CD4-positive, alpha-beta memory T cell (primary cell): ENCODE measurements at regions of chr7 and their contacts with region 1.

Region 1: GRCh38 chr7:111012799-111013675 is 77.9 kb upstream of the LRRN3 start:
- DNase-seq: peak; percentile 39 to 58 (median 43)
- H3K4me3 ChIP-seq: peak overlapping the region; percentile 18 to 28
- H3K4me3 Mint-ChIP-seq: peak overlapping the region; percentile 49 to 85 (median 77)
- H3K27ac ChIP-seq: peak overlapping the region; percentile 54
- H3K27ac Mint-ChIP-seq: peak overlapping the region; percentile 68 to 91 (median 86)
- H3K4me1 ChIP-seq: peaks cover 69% of the 10 kb centered on the region
- H3K4me1 Mint-ChIP-seq: peaks cover 35 to 63% (median 50%) of the 10 kb centered on the region in 4 donors
- H3K27me3 ChIP-seq: no peaks in the 10 kb centered on the region
- H3K27me3 Mint-ChIP-seq: no peaks in the 10 kb centered on the region

Region 2: GRCh38 chr7:110977127-110977737 is 35.8 kb before region 1 on chr7:
- CTCF ChIA-PET with region 1: interaction called, 3 read pairs
- POLR2A ChIA-PET with region 1: no interaction called
- intact Hi-C with region 1: loop called (anchors 5 kb)
- DNase-seq: peak in 4 of 5 donors; percentile 8 to 30 (median 22)
- H3K4me3 ChIP-seq: no peak overlapping the region
- H3K4me3 Mint-ChIP-seq: peak overlapping the region; percentile 14 to 84 (median 64)
- H3K27ac ChIP-seq: no peak overlapping the region
- H3K27ac Mint-ChIP-seq: peak overlapping the region; percentile 30 to 92 (median 80)
- H3K4me1 ChIP-seq: peaks cover 31% of the 10 kb centered on the region
- H3K4me1 Mint-ChIP-seq: peaks cover 13 to 22% (median 18%) of the 10 kb centered on the region in 4 donors
- H3K27me3 ChIP-seq: no peaks in the 10 kb centered on the region
- H3K27me3 Mint-ChIP-seq: no peaks in the 10 kb centered on the region

Region 3: DNA sequence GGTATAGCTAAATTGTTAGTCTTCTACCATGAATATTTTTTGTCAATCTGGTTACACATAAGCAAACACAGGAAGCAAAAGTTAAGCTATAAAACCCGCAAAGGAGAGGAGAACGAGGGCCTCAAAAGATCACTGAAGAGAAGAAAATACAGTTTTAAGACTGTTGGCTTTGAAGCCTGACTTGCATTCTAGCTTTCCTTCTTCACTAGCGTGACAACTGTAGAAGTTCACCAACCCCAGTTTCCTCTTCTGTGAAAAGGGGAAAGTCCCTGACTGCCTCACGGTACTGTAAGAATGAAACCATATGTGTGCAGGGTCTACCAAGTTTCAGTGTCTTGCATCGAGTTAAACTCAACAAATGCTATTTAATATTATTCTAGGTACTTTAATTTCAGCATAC is 70.4 kb after region 1 on chr7:
- CTCF ChIA-PET with region 1: no interaction called
- POLR2A ChIA-PET with region 1: interaction called, 7 read pairs
- intact Hi-C with region 1: loop called (anchors 2 kb)
- DNase-seq: peak; percentile 65 to 79 (median 70)
- H3K4me3 ChIP-seq: no peak overlapping the region
- H3K4me3 Mint-ChIP-seq: peak overlapping the region in 7 of 8 donors; percentile 7 to 82 (median 54)
- H3K27ac ChIP-seq: peak overlapping the region; percentile 13
- H3K27ac Mint-ChIP-seq: peak overlapping the region; percentile 50 to 96 (median 86)
- H3K4me1 ChIP-seq: peaks cover 48% of the 10 kb centered on the region
- H3K4me1 Mint-ChIP-seq: peaks cover 37 to 46% (median 39%) of the 10 kb centered on the region in 4 donors
- H3K27me3 ChIP-seq: no peaks in the 10 kb centered on the region
- H3K27me3 Mint-ChIP-seq: no peaks in the 10 kb centered on the region